ENCODE measurements at regions of chr22 and their contacts with region 1.

Region 1: DNA sequence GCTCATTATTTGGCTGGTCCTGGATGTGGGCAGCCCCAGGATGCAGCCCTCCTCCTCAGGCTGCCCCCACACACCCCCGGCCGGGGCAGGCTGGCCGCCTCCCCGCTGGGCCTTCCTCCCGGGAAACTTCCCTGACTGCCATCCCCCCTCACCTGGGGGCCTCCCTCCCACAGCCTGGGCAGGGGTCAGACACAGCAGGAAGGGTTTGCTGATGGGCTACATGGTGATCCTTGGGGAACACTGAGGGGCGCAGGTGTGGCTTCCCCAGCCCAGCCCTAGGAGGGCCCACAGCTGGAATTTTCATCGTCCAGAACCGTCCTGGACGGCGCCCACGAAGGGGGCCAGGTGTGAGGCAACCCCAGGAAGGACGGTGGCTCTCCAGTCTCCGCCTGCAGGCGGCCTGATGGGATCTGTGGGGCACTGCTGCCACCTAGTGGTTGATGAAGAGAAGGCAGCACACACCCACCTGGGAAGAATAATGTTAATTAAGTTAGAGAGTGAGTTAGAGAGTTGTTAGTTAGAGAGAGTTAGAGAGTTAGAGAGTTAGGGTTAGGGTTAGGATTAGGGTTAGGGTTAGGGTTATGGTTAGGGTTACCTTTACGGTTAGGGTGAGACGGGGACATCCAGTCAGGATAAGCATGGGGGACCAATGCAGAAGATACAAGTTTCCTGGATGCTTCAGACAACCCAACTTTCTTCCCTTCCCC is 75.9 kb upstream of the PRR5 start:
- DNase-seq: peak; percentile 72 to 91 (median 81)
- ATAC-seq: peak; percentile 90
- H3K4me3 ChIP-seq: no peak overlapping the region
- H3K4me3 Mint-ChIP-seq: no peak overlapping the region
- H3K27ac ChIP-seq: no peak overlapping the region
- H3K27ac Mint-ChIP-seq: no peak overlapping the region
- H3K4me1 ChIP-seq: peaks cover 6% of the 10 kb centered on the region
- H3K4me1 Mint-ChIP-seq: peaks cover 5% of the 10 kb centered on the region
- H3K27me3 ChIP-seq: no peaks in the 10 kb centered on the region
- H3K27me3 Mint-ChIP-seq: no peaks in the 10 kb centered on the region
- CTCF ChIP-seq: peak; percentile 97

Region 2: DNA sequence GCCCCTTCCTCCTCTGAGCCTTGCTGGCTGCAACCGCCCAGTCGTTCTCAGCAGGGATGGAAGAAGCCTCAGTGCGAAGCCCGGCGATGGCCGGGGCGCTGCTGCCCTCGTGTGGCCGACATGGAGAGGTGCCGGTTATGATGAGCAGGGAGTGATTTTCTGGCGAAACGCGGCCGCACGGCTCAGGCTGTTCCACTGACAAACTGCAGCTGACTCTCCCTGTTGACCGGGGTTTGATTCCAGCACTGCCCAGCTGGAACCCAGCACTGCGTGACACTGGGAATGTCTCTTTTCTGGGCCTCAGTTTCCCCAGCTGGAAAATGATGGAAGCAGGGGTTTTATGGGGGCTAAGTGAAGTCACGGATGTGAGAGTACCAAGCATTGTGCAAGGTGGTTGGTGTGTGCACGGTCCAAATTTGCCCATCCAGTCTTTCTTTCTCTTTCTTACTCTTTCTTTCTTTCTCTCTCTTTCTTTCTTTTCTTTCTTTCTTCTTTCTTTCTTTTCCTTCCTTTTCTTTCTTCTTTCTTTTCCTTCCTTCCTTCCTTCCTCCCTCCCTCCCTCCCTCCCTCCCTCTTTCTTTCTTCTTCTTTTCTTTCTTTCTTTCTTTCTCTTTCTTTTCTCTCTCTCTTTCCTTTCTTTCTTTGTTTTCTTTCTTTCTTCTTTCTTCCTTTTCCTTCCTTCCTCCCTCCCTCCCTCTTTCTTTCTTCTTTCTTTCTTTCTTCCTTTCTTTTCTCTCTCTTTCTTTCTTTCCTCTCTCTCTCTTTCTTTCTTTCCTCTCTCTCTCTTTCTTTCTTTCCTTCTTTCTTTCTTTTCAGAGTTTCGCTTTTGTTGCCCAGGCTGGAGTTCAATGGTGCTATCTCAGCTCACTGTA is 1240.1 kb before region 1 on chr22:
- CTCF ChIA-PET with region 1: interaction called, 3 read pairs
- POLR2A ChIA-PET with region 1: no interaction called
- intact Hi-C with region 1: loop called in 1 of 2 experiments (anchors 1 kb)
- DNase-seq: peak; percentile 46 to 85 (median 73)
- ATAC-seq: peak; percentile 82
- H3K4me3 ChIP-seq: no peak overlapping the region
- H3K4me3 Mint-ChIP-seq: no peak overlapping the region
- H3K27ac ChIP-seq: no peak overlapping the region
- H3K27ac Mint-ChIP-seq: no peak overlapping the region
- H3K4me1 ChIP-seq: peaks cover 4% of the 10 kb centered on the region
- H3K4me1 Mint-ChIP-seq: peaks cover 7% of the 10 kb centered on the region
- H3K27me3 ChIP-seq: peaks cover 7 to 14% of the 10 kb centered on the region in 2 experiments
- H3K27me3 Mint-ChIP-seq: peaks cover 18% of the 10 kb centered on the region
- CTCF ChIP-seq: peak; percentile 58

Region 3: DNA sequence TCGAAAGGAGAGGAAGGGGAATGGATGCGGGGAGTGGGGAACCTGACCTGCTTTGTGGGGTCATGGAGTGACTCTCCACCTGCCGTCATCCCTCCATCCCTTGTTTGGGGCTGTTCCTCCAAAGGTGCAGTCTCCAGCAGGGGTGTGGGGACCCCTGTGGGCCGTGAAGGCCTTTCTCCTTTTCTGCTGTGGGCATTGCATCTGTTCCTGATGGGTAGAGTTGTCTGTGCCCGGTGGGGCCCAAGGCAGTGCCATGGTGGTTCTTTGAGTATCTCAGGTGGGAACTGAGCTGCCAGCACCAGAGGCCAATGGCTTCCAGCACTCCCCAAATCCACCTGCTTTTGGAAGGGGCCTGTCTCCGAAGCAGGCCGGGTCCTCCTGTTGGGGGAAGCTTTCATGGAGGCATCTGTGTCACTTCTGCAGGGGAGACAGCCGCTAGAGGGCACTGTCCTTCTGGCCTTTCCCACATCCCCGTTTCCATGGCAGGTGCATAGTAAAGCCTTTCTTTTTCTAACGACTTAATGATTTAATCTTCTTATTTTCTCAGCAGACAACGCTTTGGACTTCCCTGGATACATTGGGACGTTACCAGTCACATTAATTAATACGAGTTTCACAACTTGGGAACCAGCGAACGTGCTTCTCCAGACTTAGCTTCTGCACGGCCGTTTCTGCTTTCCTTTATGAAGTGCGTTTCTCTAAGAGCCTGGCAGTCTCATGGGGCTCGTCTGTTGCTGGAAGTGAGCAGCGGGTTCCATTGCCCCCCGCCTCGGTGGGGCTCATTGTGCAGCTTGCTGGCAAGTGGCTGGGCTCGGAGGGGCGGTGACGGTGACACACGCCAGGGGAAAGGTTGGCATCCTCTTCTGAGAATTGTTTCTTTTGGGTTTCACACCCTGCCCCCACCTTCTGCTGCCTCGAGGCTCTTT is 544.9 kb before region 1 on chr22:
- CTCF ChIA-PET with region 1: interaction called, 73 read pairs
- POLR2A ChIA-PET with region 1: no interaction called
- intact Hi-C with region 1: loop called in 1 of 2 experiments (anchors 1 kb)
- DNase-seq: peak; percentile 46 to 83 (median 75)
- ATAC-seq: peak; percentile 57
- H3K4me3 ChIP-seq: peak overlapping the region in 1 of 2 experiments; percentile 33
- H3K4me3 Mint-ChIP-seq: no peak overlapping the region
- H3K27ac ChIP-seq: no peak overlapping the region
- H3K27ac Mint-ChIP-seq: no peak overlapping the region
- H3K4me1 ChIP-seq: peaks cover 4% of the 10 kb centered on the region
- H3K4me1 Mint-ChIP-seq: no peaks in the 10 kb centered on the region
- H3K27me3 ChIP-seq: no peaks in the 10 kb centered on the region
- H3K27me3 Mint-ChIP-seq: no peaks in the 10 kb centered on the region
- CTCF ChIP-seq: peak; percentile 69

Region 4: DNA sequence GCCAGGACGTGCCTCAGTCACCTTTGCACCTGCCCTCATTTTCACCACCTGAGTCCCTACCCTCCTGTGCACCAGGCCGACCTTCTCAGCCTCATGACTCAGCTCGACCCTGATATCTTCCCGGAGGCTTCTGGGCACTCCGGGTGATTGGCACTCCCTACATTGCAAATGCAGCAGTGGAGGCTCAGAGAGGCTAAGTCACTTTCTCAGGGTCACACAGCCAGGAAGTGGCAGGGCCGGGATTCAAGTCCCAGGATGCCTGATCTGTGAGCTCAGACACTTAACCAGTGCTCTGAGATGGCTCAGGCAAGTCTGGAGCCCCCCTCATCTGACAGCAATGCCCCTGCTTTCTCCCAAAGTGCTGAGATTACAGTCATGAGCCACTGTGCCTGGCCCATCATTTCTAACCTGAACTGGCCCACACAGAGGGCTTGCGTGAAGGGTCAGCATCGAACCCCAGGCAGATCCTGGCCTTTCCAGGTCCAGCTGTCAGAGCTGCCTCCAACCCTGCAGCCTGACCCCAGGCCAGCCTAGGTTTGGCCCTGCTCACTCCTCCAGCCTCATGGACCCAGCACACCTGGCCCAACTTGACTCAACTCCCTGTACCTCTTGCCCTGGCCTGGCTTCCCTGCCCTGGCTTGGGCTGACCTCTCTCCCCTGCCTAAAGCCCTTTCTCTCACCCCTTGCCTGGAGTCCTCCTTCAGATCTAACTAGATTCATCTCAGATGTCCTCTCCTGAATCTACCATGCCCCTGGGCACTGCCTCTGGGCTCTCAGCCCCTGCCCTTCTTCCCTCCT is 87.4 kb before region 1 on chr22:
- CTCF ChIA-PET with region 1: no interaction called
- POLR2A ChIA-PET with region 1: no interaction called
- intact Hi-C with region 1: no loop called
- DNase-seq: no peak
- ATAC-seq: no peak
- H3K4me3 ChIP-seq: no peak overlapping the region
- H3K4me3 Mint-ChIP-seq: no peak overlapping the region
- H3K27ac ChIP-seq: no peak overlapping the region
- H3K27ac Mint-ChIP-seq: no peak overlapping the region
- H3K4me1 ChIP-seq: no peaks in the 10 kb centered on the region
- H3K4me1 Mint-ChIP-seq: peaks cover 2% of the 10 kb centered on the region
- H3K27me3 ChIP-seq: no peaks in the 10 kb centered on the region
- H3K27me3 Mint-ChIP-seq: peaks cover 25% of the 10 kb centered on the region
- CTCF ChIP-seq: no peak

Region 5: DNA sequence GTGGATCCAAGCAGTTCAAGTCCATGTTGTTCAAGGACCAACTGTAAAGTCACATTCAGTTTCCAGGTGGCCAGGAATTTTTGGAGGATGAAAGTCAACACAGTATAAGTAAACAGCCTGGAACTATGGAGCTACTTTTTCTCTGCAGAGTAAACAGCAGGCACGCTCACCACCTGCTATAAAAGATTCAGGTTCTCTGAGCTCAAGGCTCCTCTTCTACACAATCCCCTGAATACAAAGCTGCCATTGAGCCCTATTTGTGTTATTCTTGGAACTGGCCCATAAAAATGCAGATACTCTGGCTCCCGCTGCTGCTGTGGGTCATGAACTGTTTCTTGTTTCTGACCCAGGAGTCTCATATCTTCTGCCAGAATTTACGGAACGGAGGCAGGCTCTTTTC is 18.9 kb after region 1 on chr22:
- CTCF ChIA-PET with region 1: interaction called, 12 read pairs
- POLR2A ChIA-PET with region 1: no interaction called
- intact Hi-C with region 1: no loop called
- DNase-seq: no peak
- ATAC-seq: no peak
- H3K4me3 ChIP-seq: no peak overlapping the region
- H3K4me3 Mint-ChIP-seq: no peak overlapping the region
- H3K27ac ChIP-seq: no peak overlapping the region
- H3K27ac Mint-ChIP-seq: no peak overlapping the region
- H3K4me1 ChIP-seq: no peaks in the 10 kb centered on the region
- H3K4me1 Mint-ChIP-seq: no peaks in the 10 kb centered on the region
- H3K27me3 ChIP-seq: no peaks in the 10 kb centered on the region
- H3K27me3 Mint-ChIP-seq: no peaks in the 10 kb centered on the region
- CTCF ChIP-seq: no peak